Thyroid gland (tissue), 4 donors: ENCODE measurements at regions of chr21 and their contacts with region 1.

Region 1: GRCh38 chr21:26709090-26709489 is 136.0 kb upstream of the CYYR1 start:
- DNase-seq: no peak
- H3K4me3 ChIP-seq: no peak overlapping the region
- H3K27ac ChIP-seq: no peak overlapping the region
- H3K4me1 ChIP-seq: no peaks in the 10 kb centered on the region
- H3K27me3 ChIP-seq: no peaks in the 10 kb centered on the region
- CTCF ChIP-seq: no peak
- POLR2A ChIP-seq: no peak

Region 2: GRCh38 chr21:26067836-26068594 is 641.1 kb before region 1 on chr21:
- intact Hi-C with region 1: no loop called
- DNase-seq: peak; percentile 17
- H3K4me3 ChIP-seq: no peak overlapping the region
- H3K27ac ChIP-seq: no peak overlapping the region
- H3K4me1 ChIP-seq: peaks cover 38 to 45% of the 10 kb centered on the region in 2 donors
- H3K27me3 ChIP-seq: no peaks in the 10 kb centered on the region
- CTCF ChIP-seq: no peak
- POLR2A ChIP-seq: no peak

Region 3: DNA sequence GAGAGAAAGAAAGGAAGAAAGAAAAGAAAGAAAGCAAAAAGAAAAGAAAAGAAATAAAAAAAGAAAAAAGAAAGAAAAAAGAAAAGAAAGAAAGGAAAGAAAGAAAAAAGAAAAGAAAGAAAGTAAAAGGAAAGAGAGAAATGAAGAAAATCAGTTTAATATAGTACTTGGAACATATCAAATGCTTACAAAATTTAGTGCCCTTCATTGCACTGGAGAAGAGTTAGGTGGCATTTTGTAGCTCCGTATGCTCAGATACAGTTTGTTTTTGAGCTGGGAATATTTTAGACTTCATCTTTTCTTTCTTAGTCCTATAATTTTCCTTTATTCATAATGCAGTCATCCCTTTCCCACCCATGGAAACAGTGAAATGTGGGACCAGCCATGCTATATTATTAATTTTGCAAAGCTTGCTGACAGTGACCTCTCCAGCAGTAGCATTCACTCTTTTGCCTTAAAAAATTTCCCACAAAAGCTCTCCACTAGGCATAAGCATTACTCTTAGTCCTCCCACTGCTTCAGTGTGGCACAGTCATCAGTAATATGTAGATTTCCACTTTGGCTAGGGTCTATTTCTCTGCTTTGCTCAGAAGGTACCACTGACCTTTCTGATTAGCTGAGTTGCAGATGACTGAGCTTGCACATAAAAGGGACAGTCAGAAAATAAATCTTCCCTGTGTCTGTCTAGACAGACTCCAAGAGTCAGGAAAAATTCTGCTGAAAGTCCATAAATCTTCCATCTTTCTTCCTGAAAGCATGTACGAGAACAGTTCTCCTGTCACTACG is 482.2 kb before region 1 on chr21:
- intact Hi-C with region 1: loop called (anchors 10 kb)
- DNase-seq: no peak
- H3K4me3 ChIP-seq: no peak overlapping the region
- H3K27ac ChIP-seq: no peak overlapping the region
- H3K4me1 ChIP-seq: no peaks in the 10 kb centered on the region
- H3K27me3 ChIP-seq: no peaks in the 10 kb centered on the region
- CTCF ChIP-seq: no peak
- POLR2A ChIP-seq: no peak

Region 4: DNA sequence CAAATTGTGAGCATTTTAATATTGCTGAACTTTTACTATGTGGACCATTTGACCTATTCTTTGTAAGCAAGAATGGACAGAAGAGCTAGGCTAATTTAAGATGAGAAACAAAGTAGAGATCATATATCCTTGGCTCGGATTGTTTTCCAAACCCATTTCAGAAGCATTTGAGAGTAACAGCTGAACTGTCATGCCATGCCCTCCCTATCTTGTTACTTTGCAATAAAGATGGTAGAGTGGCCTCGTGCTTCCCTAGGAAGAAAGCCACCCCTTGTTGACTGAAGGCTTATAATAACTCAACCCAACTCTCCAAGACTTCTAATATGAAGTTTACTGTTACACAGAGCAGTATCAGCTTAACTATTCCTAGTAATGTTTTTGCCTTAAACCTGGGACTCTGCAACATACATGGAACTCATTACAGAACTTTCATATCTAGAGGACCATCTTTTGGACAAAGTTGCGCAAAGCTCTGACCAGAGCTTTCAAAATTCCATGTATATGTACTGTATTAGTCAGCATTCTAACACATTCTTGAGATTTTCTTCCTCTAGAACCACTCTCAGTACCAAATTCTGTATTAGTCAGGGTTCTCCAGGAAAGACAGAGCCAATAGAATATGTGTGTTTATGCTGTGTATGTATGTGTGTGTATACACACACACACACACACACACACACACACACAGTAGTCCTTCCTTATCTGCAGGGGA is 67.4 kb after region 1 on chr21:
- intact Hi-C with region 1: no loop called
- DNase-seq: no peak
- H3K4me3 ChIP-seq: no peak overlapping the region
- H3K27ac ChIP-seq: no peak overlapping the region
- H3K4me1 ChIP-seq: no peaks in the 10 kb centered on the region
- H3K27me3 ChIP-seq: no peaks in the 10 kb centered on the region
- CTCF ChIP-seq: no peak
- POLR2A ChIP-seq: no peak